Activated naive CD8-positive, alpha-beta T cell treated with anti-CD3 and anti-CD28 coated beads, Interleukin-2, amount 10 ng/mL, durations not matched to agents 7 days and 5 days (primary cell): ENCODE measurements at regions of chr3 and their contacts with region 1.

Region 1: GRCh38 chr3:50635066-50635465 is 18.1 kb downstream of the MAPKAPK3 start:
- DNase-seq: no peak
- ATAC-seq: no peak
- H3K4me3 Mint-ChIP-seq: no peak overlapping the region
- H3K27ac Mint-ChIP-seq: peak overlapping the region; percentile 66
- H3K4me1 Mint-ChIP-seq: peaks cover 69% of the 10 kb centered on the region
- H3K27me3 Mint-ChIP-seq: no peaks in the 10 kb centered on the region

Region 2: GRCh38 chr3:50525987-50526386 is 109.1 kb before region 1 on chr3:
- POLR2A ChIA-PET with region 1: no interaction called
- DNase-seq: peak; percentile 76
- ATAC-seq: peak; percentile 94
- H3K4me3 Mint-ChIP-seq: no peak overlapping the region
- H3K27ac Mint-ChIP-seq: no peak overlapping the region
- H3K4me1 Mint-ChIP-seq: peaks cover 6% of the 10 kb centered on the region
- H3K27me3 Mint-ChIP-seq: peaks cover 12% of the 10 kb centered on the region

Region 3: DNA sequence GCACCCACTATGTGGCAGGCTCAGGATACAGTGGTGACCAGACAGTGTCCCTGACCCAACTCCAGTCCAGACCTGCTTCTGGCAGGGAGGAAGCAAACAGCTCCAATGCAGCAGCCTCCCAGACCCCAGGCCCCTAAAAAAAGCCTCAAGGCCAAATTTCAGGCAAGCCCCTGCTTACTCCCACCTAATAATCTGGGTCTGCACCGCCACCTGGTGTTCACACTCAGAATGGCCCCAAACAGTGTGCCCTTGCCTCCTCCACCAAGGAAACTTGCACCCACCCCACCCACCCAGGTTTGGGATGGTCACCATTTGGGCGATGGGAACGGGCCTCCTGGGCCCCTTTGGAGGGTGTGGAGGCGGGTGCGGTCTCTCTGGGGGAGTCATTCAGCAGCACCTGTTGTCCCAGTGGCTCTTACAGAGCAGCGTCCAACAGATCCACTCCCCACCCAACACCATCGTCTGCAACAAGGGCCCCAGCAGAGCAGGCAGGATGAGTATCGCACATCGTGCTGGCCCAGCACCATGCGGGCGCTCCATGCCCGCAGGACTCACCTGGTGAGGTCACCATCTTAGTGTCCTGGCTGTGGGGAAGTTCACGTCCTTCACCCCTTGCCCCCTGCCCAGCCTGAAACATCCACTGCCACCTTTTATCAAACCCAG is 84.9 kb before region 1 on chr3:
- POLR2A ChIA-PET with region 1: no interaction called
- DNase-seq: peak; percentile 79
- ATAC-seq: peak; percentile 62
- H3K4me3 Mint-ChIP-seq: no peak overlapping the region
- H3K27ac Mint-ChIP-seq: peak overlapping the region; percentile 34
- H3K4me1 Mint-ChIP-seq: peaks cover 2% of the 10 kb centered on the region
- H3K27me3 Mint-ChIP-seq: no peaks in the 10 kb centered on the region

Region 4: DNA sequence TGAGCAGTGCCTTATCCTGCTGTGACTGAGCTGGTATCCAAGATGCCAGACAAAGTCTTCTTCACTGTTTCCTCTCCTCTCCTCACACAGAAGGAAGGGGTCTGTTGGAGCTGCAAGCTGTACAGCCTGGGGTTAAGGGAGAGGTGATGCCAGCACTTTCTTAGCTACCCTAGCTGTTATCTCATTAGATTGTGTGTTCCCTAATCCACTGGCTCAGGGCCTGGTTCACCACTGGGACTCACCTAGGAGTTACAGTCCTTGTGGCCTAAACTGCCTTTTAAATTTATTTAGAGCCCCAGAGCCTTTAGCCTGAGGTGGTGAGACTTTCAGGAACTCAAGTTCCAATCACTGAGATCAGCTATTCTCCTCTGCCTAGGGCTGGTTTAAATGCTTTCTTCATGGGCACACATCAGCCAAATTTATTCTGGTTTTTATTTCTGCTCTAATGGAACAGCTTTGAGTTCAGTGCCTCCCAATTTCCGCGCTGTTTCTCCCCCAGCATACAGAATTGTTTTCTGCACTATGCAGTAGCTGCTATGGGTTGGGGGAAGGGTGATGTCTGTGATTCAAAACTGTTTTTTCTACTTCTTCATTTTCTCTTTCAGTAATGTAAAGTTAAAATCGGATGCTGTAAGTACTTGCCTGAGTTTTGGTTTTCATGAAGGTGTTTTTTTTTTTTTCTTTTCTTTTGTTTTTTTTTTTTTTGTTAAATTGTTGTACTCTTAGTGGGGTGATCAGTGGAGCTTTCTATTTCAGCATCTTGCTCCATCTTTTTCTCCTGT is 238.5 kb after region 1 on chr3:
- POLR2A ChIA-PET with region 1: interaction called, 11 read pairs
- DNase-seq: no peak
- ATAC-seq: no peak
- H3K4me3 Mint-ChIP-seq: no peak overlapping the region
- H3K27ac Mint-ChIP-seq: no peak overlapping the region
- H3K4me1 Mint-ChIP-seq: no peaks in the 10 kb centered on the region
- H3K27me3 Mint-ChIP-seq: peaks cover 1% of the 10 kb centered on the region